ENCODE measurements at regions of chr19 and their contacts with region 1.

Region 1: DNA sequence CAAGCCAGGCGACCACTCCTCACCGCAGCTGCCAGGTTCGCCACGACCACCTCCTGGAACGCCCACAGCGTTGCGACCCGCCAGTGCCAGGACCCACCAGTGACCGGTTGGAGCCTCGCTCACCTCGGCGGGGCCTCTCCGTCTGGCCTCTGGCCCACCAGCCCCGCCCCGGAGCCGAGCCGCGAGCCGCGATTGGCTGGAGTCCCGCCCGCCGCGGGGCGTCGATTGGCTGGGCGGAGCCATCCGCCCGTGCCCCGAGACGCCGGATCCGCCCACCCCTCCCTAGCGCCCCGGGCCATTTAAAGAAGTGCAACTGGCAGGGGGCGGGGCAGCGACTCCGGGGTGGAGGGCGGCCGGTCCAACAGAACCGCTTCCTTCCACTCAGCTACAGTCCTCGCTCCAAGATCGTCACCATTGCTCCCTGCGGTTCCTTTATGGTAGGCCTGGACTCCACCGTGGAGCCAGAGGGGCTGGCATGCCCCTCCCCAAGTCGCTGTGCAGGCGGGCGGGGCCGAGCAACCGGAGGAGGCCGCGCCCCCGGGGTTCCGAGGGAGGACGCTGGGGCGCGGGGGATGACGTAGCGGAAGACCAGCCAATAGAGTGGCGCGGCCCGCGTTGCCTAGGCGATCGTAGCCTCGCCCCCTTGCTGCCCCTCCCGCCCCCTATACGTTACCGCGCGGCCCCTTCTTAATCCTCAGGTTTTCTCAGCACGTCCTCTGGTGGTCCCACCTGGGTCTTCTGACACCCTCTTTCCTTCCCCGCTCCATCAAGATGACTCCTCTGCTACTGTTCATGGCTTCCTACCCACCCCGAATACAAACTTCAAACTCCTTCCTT is at the start of gene SERTAD3:
- DNase-seq: peak; percentile 93 to 98 (median 97)
- ATAC-seq: peak; percentile 69
- H3K4me3 ChIP-seq: peak within 1 kb of the TSS; percentile 67 to 82
- H3K4me3 Mint-ChIP-seq: peak within 1 kb of the TSS; percentile 99
- H3K27ac ChIP-seq: peak within 1 kb of the TSS; percentile 74 to 80
- H3K27ac Mint-ChIP-seq: peak within 1 kb of the TSS; percentile 96
- H3K4me1 ChIP-seq: peaks cover 15% of the 10 kb centered on the region
- H3K4me1 Mint-ChIP-seq: peaks cover 22% of the 10 kb centered on the region
- H3K27me3 ChIP-seq: no peaks in the 10 kb centered on the region
- H3K27me3 Mint-ChIP-seq: no peaks in the 10 kb centered on the region
- CTCF ChIP-seq: no peak
- total RNA-seq, gene SERTAD3: 27.9 to 33.4 TPM

Region 2: DNA sequence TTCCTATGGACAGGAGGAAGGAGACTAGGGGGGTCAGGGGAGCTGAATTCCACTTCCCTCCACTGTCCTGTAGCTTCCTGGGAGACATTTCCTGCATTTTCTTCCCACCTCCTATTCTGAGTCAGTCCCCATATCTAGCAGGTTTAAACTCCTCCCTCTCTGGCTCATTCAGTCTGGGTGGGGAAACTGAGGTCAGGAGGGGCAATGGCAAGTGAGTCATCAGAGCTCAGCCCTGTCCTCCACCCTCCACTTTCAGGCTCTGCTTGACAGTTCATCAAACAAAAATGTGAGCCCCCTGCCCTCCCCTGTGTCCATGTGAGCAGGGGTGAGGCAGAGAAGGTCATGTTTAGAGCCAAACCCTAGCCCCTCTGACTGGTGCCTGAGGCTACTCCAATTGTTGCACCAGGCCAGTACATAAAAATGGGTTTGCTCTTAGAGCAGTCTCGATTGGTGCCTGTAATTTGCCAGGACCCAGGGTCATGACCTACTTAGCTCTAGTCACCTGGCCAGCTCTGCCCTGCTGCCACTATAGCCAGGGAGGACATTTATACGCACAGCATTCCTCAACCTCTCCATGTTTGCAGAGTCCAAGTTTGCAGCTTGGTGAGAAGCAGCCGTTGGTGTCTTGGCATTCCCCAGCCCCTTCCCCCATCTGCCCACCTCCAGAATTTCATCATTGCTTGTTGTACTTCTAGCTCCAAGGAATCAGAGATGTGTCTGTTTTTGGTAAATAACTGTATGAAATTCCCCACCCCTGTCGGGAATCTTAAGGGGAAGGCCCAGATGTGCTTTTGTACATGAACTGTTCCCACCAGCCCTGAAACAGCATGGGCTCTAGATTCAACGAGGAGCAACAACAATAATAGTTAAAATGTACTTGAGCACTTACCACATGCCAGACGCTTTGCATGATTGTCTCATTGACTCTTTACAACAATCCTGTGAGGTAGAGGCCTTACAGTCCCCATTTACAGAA is 1081.4 kb before region 1 on chr19:
- CTCF ChIA-PET with region 1: no interaction called
- POLR2A ChIA-PET with region 1: no interaction called
- intact Hi-C with region 1: no loop called
- DNase-seq: no peak
- ATAC-seq: no peak
- H3K4me3 ChIP-seq: no peak overlapping the region
- H3K4me3 Mint-ChIP-seq: no peak overlapping the region
- H3K27ac ChIP-seq: no peak overlapping the region
- H3K27ac Mint-ChIP-seq: no peak overlapping the region
- H3K4me1 ChIP-seq: no peaks in the 10 kb centered on the region
- H3K4me1 Mint-ChIP-seq: no peaks in the 10 kb centered on the region
- H3K27me3 ChIP-seq: no peaks in the 10 kb centered on the region
- H3K27me3 Mint-ChIP-seq: no peaks in the 10 kb centered on the region
- CTCF ChIP-seq: no peak

Region 3: GRCh38 chr19:39824143-39825092 is 620.0 kb before region 1 on chr19:
- CTCF ChIA-PET with region 1: no interaction called
- POLR2A ChIA-PET with region 1: no interaction called
- intact Hi-C with region 1: loop called in 1 of 2 experiments (anchors 2 kb)
- DNase-seq: peak; percentile 72 to 94 (median 87)
- ATAC-seq: peak; percentile 98
- H3K4me3 ChIP-seq: peak overlapping the region; percentile 72 to 79
- H3K4me3 Mint-ChIP-seq: no peak overlapping the region
- H3K27ac ChIP-seq: peak overlapping the region; percentile 43 to 45
- H3K27ac Mint-ChIP-seq: no peak overlapping the region
- H3K4me1 ChIP-seq: peaks cover 27% of the 10 kb centered on the region
- H3K4me1 Mint-ChIP-seq: peaks cover 17% of the 10 kb centered on the region
- H3K27me3 ChIP-seq: no peaks in the 10 kb centered on the region
- H3K27me3 Mint-ChIP-seq: no peaks in the 10 kb centered on the region
- CTCF ChIP-seq: no peak

Region 4: GRCh38 chr19:40139533-40140287 is 304.7 kb before region 1 on chr19:
- CTCF ChIA-PET with region 1: no interaction called
- POLR2A ChIA-PET with region 1: no interaction called
- intact Hi-C with region 1: loop called (anchors 5 kb)
- DNase-seq: peak in 4 of 9 experiments; percentile 14 to 78 (median 46)
- ATAC-seq: peak; percentile 30
- H3K4me3 ChIP-seq: no peak overlapping the region
- H3K4me3 Mint-ChIP-seq: no peak overlapping the region
- H3K27ac ChIP-seq: no peak overlapping the region
- H3K27ac Mint-ChIP-seq: no peak overlapping the region
- H3K4me1 ChIP-seq: peaks cover 26% of the 10 kb centered on the region
- H3K4me1 Mint-ChIP-seq: peaks cover 26% of the 10 kb centered on the region
- H3K27me3 ChIP-seq: no peaks in the 10 kb centered on the region
- H3K27me3 Mint-ChIP-seq: peaks cover 9% of the 10 kb centered on the region
- CTCF ChIP-seq: peak; percentile 71

Region 5: DNA sequence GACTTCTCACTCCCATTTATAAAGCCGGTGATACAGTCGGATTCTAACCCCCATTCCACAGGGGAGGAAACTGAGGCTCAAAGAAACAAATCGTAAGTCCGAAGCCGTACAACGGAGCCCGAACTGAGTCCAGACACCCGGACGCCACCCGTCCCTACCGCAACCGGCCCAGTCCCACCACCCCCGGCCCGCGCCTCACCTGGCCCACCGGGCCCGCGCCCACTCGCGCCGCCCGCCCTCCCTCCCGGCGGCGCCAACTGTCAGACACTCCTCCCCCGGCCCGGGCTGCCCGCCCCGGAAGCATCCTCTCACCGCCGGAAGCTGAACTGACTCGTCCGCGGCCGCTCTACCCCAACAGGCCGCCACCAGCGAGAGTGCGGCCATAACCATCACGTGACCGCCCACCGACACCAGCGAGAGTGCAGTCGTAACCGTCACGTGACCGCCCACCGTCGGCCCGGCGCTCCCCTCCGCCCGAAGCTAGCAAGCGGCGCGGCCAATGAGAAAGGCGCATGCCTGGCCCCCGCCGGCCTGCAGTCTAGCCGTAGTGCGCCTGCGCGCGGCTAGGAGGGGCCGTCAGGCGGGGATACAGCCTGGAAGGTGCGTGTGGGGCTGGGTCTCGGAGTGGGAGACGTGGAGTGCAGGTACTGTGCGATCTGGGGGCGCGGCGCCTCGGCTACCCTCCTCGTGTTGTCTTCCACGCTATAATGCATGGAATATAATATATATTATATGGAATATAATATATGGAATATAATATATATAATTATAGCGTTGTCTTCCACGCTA is 96.1 kb before region 1 on chr19 and contains the starts of genes C19orf47 and PLD3:
- CTCF ChIA-PET with region 1: no interaction called
- POLR2A ChIA-PET with region 1: interaction called, 7 read pairs
- intact Hi-C with region 1: loop called (anchors 1 kb)
- DNase-seq: peak; percentile 96 to 100 (median 98)
- ATAC-seq: peak; percentile 89
- H3K4me3 ChIP-seq: peak within 1 kb of the TSS; percentile 61 to 89
- H3K4me3 Mint-ChIP-seq: peak within 1 kb of the TSS; percentile 88
- H3K27ac ChIP-seq: peak within 1 kb of the TSS; percentile 73
- H3K27ac Mint-ChIP-seq: peak within 1 kb of the TSS; percentile 90
- H3K4me1 ChIP-seq: peaks cover 13% of the 10 kb centered on the region
- H3K4me1 Mint-ChIP-seq: peaks cover 37% of the 10 kb centered on the region
- H3K27me3 ChIP-seq: no peaks in the 10 kb centered on the region
- H3K27me3 Mint-ChIP-seq: no peaks in the 10 kb centered on the region
- CTCF ChIP-seq: no peak
- total RNA-seq, gene C19orf47: 10.2 to 11.2 TPM
- total RNA-seq, gene PLD3: 48.9 to 56.1 TPM

Region 6: GRCh38 chr19:40433391-40434216 is 10.8 kb before region 1 on chr19:
- CTCF ChIA-PET with region 1: interaction called, 7 read pairs
- POLR2A ChIA-PET with region 1: interaction called, 12 read pairs
- intact Hi-C with region 1: loop called in 1 of 2 experiments (anchors 1 kb)
- DNase-seq: peak in 8 of 9 experiments; percentile 43 to 73 (median 50)
- ATAC-seq: peak; percentile 83
- H3K4me3 ChIP-seq: peak overlapping the region; percentile 43 to 53
- H3K4me3 Mint-ChIP-seq: peak overlapping the region; percentile 94
- H3K27ac ChIP-seq: peak overlapping the region; percentile 49 to 75
- H3K27ac Mint-ChIP-seq: peak overlapping the region; percentile 99
- H3K4me1 ChIP-seq: peaks cover 7% of the 10 kb centered on the region
- H3K4me1 Mint-ChIP-seq: peaks cover 19% of the 10 kb centered on the region
- H3K27me3 ChIP-seq: no peaks in the 10 kb centered on the region
- H3K27me3 Mint-ChIP-seq: no peaks in the 10 kb centered on the region
- CTCF ChIP-seq: no peak

Region 7: DNA sequence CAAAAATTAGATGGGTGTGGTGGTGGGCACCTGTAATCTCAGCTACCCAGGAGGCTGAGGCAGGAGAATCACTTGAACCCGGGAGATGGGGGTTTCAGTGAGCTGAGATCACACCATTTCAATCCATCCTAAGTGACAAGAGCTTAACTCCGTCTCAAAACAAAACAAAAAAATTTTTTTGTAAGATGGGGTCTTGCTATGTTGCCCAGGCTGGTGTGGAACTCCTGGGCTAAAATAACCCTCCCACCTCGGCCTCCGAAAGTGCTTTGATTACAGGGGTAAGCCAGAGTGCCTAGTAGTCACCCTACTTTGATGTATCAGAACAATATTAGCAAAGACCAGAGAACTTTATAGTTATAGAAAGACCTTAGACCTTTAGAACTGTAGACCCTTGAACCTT is 30.3 kb after region 1 on chr19:
- CTCF ChIA-PET with region 1: no interaction called
- POLR2A ChIA-PET with region 1: no interaction called
- intact Hi-C with region 1: no loop called
- DNase-seq: no peak
- ATAC-seq: no peak
- H3K4me3 ChIP-seq: no peak overlapping the region
- H3K4me3 Mint-ChIP-seq: no peak overlapping the region
- H3K27ac ChIP-seq: no peak overlapping the region
- H3K27ac Mint-ChIP-seq: no peak overlapping the region
- H3K4me1 ChIP-seq: no peaks in the 10 kb centered on the region
- H3K4me1 Mint-ChIP-seq: no peaks in the 10 kb centered on the region
- H3K27me3 ChIP-seq: no peaks in the 10 kb centered on the region
- H3K27me3 Mint-ChIP-seq: peaks cover 2% of the 10 kb centered on the region
- CTCF ChIP-seq: no peak

Region 8: GRCh38 chr19:40576585-40577451 is 132.4 kb after region 1 on chr19 and contains the start of gene SHKBP1:
- CTCF ChIA-PET with region 1: no interaction called
- POLR2A ChIA-PET with region 1: no interaction called
- intact Hi-C with region 1: loop called in 1 of 2 experiments (anchors 5 kb)
- DNase-seq: peak; percentile 84 to 97 (median 93)
- ATAC-seq: peak; percentile 99
- H3K4me3 ChIP-seq: peak within 1 kb of the TSS; percentile 72 to 94
- H3K4me3 Mint-ChIP-seq: peak within 1 kb of the TSS; percentile 90
- H3K27ac ChIP-seq: peak within 1 kb of the TSS; percentile 61 to 75
- H3K27ac Mint-ChIP-seq: peak within 1 kb of the TSS; percentile 80
- H3K4me1 ChIP-seq: peaks cover 20% of the 10 kb centered on the region
- H3K4me1 Mint-ChIP-seq: peaks cover 21% of the 10 kb centered on the region
- H3K27me3 ChIP-seq: no peaks in the 10 kb centered on the region
- H3K27me3 Mint-ChIP-seq: no peaks in the 10 kb centered on the region
- CTCF ChIP-seq: no peak
- total RNA-seq, gene SHKBP1: 93.8 to 95.3 TPM

Region 9: GRCh38 chr19:41353466-41354342 is 909.3 kb after region 1 on chr19 and contains the start of gene TGFB1:
- CTCF ChIA-PET with region 1: no interaction called
- POLR2A ChIA-PET with region 1: no interaction called
- intact Hi-C with region 1: loop called in 1 of 2 experiments (anchors 5 kb)
- DNase-seq: peak; percentile 91 to 98 (median 96)
- ATAC-seq: peak; percentile 69
- H3K4me3 ChIP-seq: peak within 1 kb of the TSS; percentile 74 to 79
- H3K4me3 Mint-ChIP-seq: peak within 1 kb of the TSS; percentile 95
- H3K27ac ChIP-seq: peak within 1 kb of the TSS; percentile 76 to 82
- H3K27ac Mint-ChIP-seq: peak within 1 kb of the TSS; percentile 96
- H3K4me1 ChIP-seq: peaks cover 69% of the 10 kb centered on the region
- H3K4me1 Mint-ChIP-seq: peaks cover 60% of the 10 kb centered on the region
- H3K27me3 ChIP-seq: no peaks in the 10 kb centered on the region
- H3K27me3 Mint-ChIP-seq: no peaks in the 10 kb centered on the region
- CTCF ChIP-seq: peak; percentile 85
- total RNA-seq, gene TGFB1: 652 to 710 TPM